ENCODE measurements at regions of chr1 and their contacts with region 1.

Region 1: GRCh38 chr1:171984850-171985485 is 143.7 kb downstream of the DNM3 start:
- DNase-seq: no peak
- H3K4me3 ChIP-seq: no peak overlapping the region
- H3K27ac ChIP-seq: no peak overlapping the region
- H3K4me1 ChIP-seq: peaks cover 0 to 9% (median 2%) of the 10 kb centered on the region in 6 donors
- H3K27me3 ChIP-seq: no peaks in the 10 kb centered on the region
- CTCF ChIP-seq: peak; percentile 27 to 78 (median 66)
- POLR2A ChIP-seq: no peak

Region 2: GRCh38 chr1:171243878-171244277 is 741.1 kb before region 1 on chr1:
- intact Hi-C with region 1: no loop called
- DNase-seq: no peak
- H3K4me3 ChIP-seq: no peak overlapping the region
- H3K27ac ChIP-seq: no peak overlapping the region
- H3K4me1 ChIP-seq: no peaks in the 10 kb centered on the region
- H3K27me3 ChIP-seq: peaks cover 0 to 7% (median 0%) of the 10 kb centered on the region in 7 donors
- CTCF ChIP-seq: no peak
- POLR2A ChIP-seq: no peak

Region 3: GRCh38 chr1:171644805-171645483 is 340.0 kb before region 1 on chr1:
- intact Hi-C with region 1: loop called (anchors 10 kb)
- DNase-seq: no peak
- H3K4me3 ChIP-seq: no peak overlapping the region
- H3K27ac ChIP-seq: no peak overlapping the region
- H3K4me1 ChIP-seq: peaks cover 0 to 18% (median 10%) of the 10 kb centered on the region in 6 donors
- H3K27me3 ChIP-seq: peaks cover 0 to 10% (median 0%) of the 10 kb centered on the region in 7 donors
- CTCF ChIP-seq: peak in 9 of 11 experiments; percentile 44 to 76 (median 63)
- POLR2A ChIP-seq: no peak

Region 4: DNA sequence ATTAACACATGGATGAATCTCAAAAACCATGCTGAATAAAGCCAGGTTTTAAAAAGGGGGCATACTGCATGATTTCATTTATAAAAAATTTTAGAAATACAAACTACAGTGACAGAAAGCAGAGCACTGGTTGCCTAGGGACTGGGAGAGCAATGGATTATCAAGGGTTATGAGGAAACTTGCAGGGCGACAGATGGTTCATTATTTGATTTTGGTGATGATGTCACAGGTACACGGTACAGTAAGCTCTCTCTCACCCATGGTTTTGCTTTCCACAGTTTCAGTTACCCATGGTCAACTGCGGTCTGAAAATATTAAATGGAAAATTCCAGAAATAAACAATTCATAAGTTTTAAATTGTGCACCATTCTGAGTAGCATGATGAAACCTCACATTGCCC is 257.2 kb before region 1 on chr1:
- intact Hi-C with region 1: no loop called
- DNase-seq: no peak
- H3K4me3 ChIP-seq: no peak overlapping the region
- H3K27ac ChIP-seq: no peak overlapping the region
- H3K4me1 ChIP-seq: peaks cover 0 to 13% (median 0%) of the 10 kb centered on the region in 6 donors
- H3K27me3 ChIP-seq: no peaks in the 10 kb centered on the region
- CTCF ChIP-seq: no peak
- POLR2A ChIP-seq: no peak

Region 5: GRCh38 chr1:171801487-171801891 is 183.5 kb before region 1 on chr1:
- intact Hi-C with region 1: loop called (anchors 5 kb)
- DNase-seq: no peak
- H3K4me3 ChIP-seq: no peak overlapping the region
- H3K27ac ChIP-seq: no peak overlapping the region
- H3K4me1 ChIP-seq: peaks cover 0 to 19% (median 3%) of the 10 kb centered on the region in 6 donors
- H3K27me3 ChIP-seq: no peaks in the 10 kb centered on the region
- CTCF ChIP-seq: peak; percentile 17 to 70 (median 65)
- POLR2A ChIP-seq: no peak

Region 6: DNA sequence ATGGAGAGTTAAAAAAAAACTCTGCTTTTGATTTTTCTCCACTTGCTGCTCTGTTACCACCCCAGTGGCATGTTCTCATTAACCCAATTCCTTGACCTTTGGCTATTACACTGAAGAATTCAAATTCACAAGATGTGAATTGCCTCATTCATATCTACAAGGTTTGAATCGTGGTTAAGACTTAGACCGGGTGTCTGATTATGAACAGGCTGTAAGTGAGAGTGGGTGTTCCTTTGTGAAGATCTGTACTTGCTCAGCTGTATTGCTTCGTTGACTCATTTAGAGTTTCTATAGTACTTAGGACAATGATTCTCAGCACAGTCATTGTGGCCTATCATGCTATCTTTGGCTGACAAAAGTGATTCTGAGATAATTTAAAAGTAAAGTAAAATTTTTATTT is 107.3 kb before region 1 on chr1:
- intact Hi-C with region 1: no loop called
- DNase-seq: no peak
- H3K4me3 ChIP-seq: no peak overlapping the region
- H3K27ac ChIP-seq: no peak overlapping the region
- H3K4me1 ChIP-seq: no peaks in the 10 kb centered on the region
- H3K27me3 ChIP-seq: no peaks in the 10 kb centered on the region
- CTCF ChIP-seq: no peak
- POLR2A ChIP-seq: no peak